Psoas muscle (tissue), 8 donors: ENCODE measurements at regions of chr6 and their contacts with region 1.

Region 1: DNA sequence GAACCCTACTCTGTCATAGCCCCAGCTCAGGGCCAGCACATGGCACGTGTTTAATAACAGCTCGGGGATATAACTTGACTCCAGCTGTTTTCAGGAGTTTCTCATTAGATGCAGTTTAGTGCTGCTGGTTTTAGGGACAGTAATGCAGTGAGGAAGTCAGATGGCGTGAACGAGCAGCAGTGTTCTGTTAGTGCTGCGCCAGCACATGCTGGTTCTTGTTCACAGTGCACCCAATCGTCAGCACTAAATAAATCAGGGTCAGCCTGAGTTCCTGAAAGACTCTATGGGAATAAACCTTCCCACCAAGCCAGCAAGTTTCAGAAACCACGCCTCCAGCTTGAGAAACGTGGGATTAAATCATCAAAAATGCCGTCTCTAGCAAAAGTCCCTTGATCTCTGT is 235.9 kb upstream of the SUPT3H start:
- DNase-seq: peak; percentile 32 to 61
- ATAC-seq: peak in 3 of 4 donors; percentile 46 to 68 (median 54)
- H3K4me3 ChIP-seq: no peak overlapping the region
- H3K27ac ChIP-seq: no peak overlapping the region
- H3K4me1 ChIP-seq: peaks cover 6% of the 10 kb centered on the region
- H3K27me3 ChIP-seq: no peaks in the 10 kb centered on the region
- CTCF ChIP-seq: no peak

Region 2: GRCh38 chr6:43883847-43884651 is 1729.6 kb before region 1 on chr6:
- intact Hi-C with region 1: loop called in 1 of 2 experiments (anchors 10 kb)
- DNase-seq: no peak
- ATAC-seq: no peak
- H3K4me3 ChIP-seq: no peak overlapping the region
- H3K27ac ChIP-seq: no peak overlapping the region
- H3K4me1 ChIP-seq: peaks cover 25% of the 10 kb centered on the region
- H3K27me3 ChIP-seq: no peaks in the 10 kb centered on the region
- CTCF ChIP-seq: no peak